PC-3 (cell line): ENCODE measurements at regions of chr1 and their contacts with region 1.

Region 1: DNA sequence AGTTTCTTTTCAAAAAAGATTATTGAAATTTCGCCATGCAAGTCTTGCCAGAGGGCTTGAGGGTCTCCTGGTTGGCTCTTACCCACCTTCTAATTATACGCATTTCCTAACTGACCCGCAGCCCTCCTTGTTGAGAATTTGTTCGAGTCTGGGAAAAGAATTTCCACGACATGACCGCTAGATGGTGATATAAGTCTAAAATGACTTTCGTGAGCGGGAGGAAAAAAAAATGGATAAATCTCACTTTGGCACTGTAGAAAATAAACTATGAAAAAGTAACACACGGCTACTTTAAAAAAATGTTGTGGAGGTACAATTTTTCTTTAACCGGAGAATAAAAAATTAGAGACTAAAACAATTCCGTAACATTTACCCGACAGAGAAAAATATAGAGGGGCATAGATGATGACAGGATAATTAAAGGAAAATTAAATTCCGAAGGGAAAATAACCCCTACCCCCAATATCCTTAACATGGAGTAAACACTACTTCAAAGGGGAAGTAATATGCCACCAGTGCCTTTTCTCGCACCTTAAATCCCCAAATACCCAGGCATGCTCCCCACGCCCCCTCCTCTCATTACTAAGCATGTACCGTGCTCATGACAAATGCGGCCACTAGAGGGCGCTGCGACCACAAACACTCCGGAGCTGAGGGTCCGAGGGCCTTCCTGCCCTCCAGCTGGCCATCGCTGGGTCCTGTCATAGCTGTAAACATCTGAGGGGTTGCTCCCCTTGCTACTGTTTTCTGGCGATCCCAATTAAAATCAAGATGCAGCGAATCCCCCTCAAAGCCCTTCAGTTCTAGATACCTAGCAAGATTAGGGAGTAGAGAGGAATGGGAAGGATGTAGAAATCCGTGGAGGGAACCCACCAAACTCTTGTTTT is 266.9 kb downstream of the ASTN1 start:
- DNase-seq: peak; percentile 72
- ATAC-seq: peak; percentile 80
- H3K4me3 ChIP-seq: peak overlapping the region; percentile 57
- H3K27ac ChIP-seq: no peak overlapping the region
- H3K4me1 ChIP-seq: no peaks in the 10 kb centered on the region
- H3K27me3 ChIP-seq: peaks cover 32% of the 10 kb centered on the region; the same call in 1 of the 2 replicates
- CTCF ChIP-seq: peak; percentile 85

Region 2: GRCh38 chr1:177082855-177083693 is 185.5 kb after region 1 on chr1:
- CTCF ChIA-PET with region 1: no interaction called
- POLR2A ChIA-PET with region 1: no interaction called
- intact Hi-C with region 1: loop called (anchors 2 kb)
- DNase-seq: peak; percentile 83
- ATAC-seq: peak; percentile 90
- H3K4me3 ChIP-seq: no peak overlapping the region
- H3K27ac ChIP-seq: peak overlapping the region; percentile 84
- H3K4me1 ChIP-seq: peaks cover 29% of the 10 kb centered on the region
- H3K27me3 ChIP-seq: no peaks in the 10 kb centered on the region
- CTCF ChIP-seq: no peak

Region 3: GRCh38 chr1:177355595-177355994 is 458.0 kb after region 1 on chr1:
- CTCF ChIA-PET with region 1: no interaction called
- POLR2A ChIA-PET with region 1: no interaction called
- intact Hi-C with region 1: loop called (anchors 1 kb)
- DNase-seq: peak; percentile 60
- ATAC-seq: peak; percentile 81
- H3K4me3 ChIP-seq: no peak overlapping the region
- H3K27ac ChIP-seq: no peak overlapping the region
- H3K4me1 ChIP-seq: 0 out of 2 replicates have a peak, but pooled peaks cover 3% of the 10 kb centered on the region
- H3K27me3 ChIP-seq: no peaks in the 10 kb centered on the region
- CTCF ChIP-seq: peak; percentile 72

Region 4: DNA sequence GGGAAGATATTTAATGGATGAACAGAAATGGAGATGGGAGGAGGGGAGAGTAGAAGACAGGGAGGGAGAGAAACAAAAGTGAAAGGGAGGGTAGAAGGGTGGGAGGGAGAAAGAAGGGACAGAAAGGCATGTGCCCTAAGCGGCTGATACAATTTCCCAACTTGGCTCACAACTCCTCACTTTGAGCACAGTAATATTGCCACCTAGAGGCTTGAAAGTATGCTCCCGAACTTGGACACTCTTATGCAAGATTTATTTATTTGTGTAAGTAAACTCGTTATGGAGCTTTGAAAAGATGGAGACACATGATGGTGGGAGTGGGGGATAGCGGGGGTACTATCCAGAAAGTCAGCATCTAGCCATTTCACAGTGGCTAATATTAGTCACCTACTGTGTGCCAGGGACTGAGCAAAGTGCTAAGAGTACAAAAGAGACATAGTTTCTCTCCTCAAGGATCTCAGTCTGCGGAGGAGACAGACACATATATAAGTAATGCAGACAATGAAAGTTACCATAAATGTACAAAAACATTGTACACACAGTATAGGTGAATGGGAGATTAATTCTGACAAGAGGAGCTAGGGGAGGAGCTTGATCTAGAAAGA is 882.6 kb after region 1 on chr1:
- CTCF ChIA-PET with region 1: no interaction called
- POLR2A ChIA-PET with region 1: no interaction called
- intact Hi-C with region 1: loop called (anchors 1 kb)
- DNase-seq: peak; percentile 73
- ATAC-seq: peak; percentile 70
- H3K4me3 ChIP-seq: no peak overlapping the region
- H3K27ac ChIP-seq: no peak overlapping the region
- H3K4me1 ChIP-seq: no peaks in the 10 kb centered on the region
- H3K27me3 ChIP-seq: no peaks in the 10 kb centered on the region
- CTCF ChIP-seq: peak; percentile 70

Region 5: GRCh38 chr1:177948336-177948972 is 1050.9 kb after region 1 on chr1:
- CTCF ChIA-PET with region 1: no interaction called
- POLR2A ChIA-PET with region 1: no interaction called
- intact Hi-C with region 1: loop called (anchors 1 kb)
- DNase-seq: peak; percentile 70
- ATAC-seq: peak; percentile 76
- H3K4me3 ChIP-seq: peak overlapping the region; percentile 47; the same call in 1 of the 2 replicates
- H3K27ac ChIP-seq: no peak overlapping the region
- H3K4me1 ChIP-seq: no peaks in the 10 kb centered on the region
- H3K27me3 ChIP-seq: no peaks in the 10 kb centered on the region
- CTCF ChIP-seq: peak; percentile 84